Activated CD4-positive, alpha-beta memory T cell treated with anti-CD3 and anti-CD28 coated beads, Interleukin-2, amount 10 ng/mL, durations not matched to agents 7 days and 5 days (primary cell): ENCODE measurements at regions of chr16 and their contacts with region 1.

Region 1: DNA sequence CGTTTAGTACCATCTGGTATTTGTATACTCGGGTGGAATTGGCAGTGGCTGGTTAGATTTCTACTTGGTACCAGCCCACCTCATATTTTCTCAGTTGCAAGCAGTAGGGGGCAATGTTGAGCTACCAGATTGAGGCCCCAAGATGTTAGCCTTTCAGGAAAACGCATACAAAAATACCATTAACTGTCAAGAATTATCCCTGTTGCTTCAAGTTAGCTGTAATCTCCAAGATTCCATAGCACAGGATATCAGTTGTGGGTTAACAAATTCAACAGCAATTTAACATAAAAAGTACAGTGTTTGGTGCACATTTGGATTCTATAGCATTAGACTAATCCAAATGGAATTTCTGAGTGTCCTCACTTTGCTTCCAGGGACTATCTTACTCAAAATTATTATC is 188.2 kb downstream of the FTO start:
- DNase-seq: peak; percentile 66
- H3K4me3 Mint-ChIP-seq: peak overlapping the region; percentile 14
- H3K27ac Mint-ChIP-seq: peak overlapping the region; percentile 59
- H3K4me1 Mint-ChIP-seq: peaks cover 33% of the 10 kb centered on the region
- H3K27me3 Mint-ChIP-seq: no peaks in the 10 kb centered on the region

Region 2: GRCh38 chr16:53692142-53692541 is 200.0 kb before region 1 on chr16:
- CTCF ChIA-PET with region 1: no interaction called
- POLR2A ChIA-PET with region 1: no interaction called
- DNase-seq: no peak
- H3K4me3 Mint-ChIP-seq: no peak overlapping the region
- H3K27ac Mint-ChIP-seq: no peak overlapping the region
- H3K4me1 Mint-ChIP-seq: no peaks in the 10 kb centered on the region
- H3K27me3 Mint-ChIP-seq: no peaks in the 10 kb centered on the region

Region 3: DNA sequence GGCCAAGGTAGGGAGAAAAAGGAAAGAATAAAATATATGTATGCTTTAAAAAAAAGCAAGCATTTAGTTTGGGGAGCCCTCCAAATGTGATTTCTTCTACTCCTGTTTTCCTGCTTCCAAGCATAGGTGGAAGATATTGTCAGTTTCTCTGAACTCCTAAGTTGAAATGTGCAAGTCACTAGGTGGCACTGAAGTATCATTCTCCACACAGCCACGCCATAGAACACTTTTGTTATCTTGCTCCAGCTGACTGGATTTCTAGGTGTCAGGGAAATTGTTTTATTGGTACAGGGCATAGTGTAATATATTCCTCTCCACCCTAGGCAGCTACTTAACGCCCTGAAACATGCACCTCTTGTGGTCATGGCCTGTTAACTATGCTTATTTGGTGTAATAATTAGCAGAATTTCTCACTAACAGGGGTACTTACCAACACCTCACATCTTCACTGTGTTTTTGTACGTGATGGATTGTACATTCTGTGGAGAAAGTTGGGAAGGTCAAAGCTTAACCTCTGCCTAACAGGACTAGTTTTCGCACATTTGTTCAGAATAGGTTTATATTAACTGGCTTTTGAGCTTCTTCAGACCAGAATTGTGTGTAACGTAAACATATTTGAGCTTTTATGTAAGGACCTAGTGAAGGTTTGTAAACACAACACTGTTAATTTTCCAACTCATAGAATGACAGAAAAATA is 118.9 kb before region 1 on chr16:
- CTCF ChIA-PET with region 1: interaction called, 13 read pairs
- POLR2A ChIA-PET with region 1: no interaction called
- DNase-seq: peak; percentile 19
- H3K4me3 Mint-ChIP-seq: no peak overlapping the region
- H3K27ac Mint-ChIP-seq: no peak overlapping the region
- H3K4me1 Mint-ChIP-seq: peaks cover 25% of the 10 kb centered on the region
- H3K27me3 Mint-ChIP-seq: no peaks in the 10 kb centered on the region

Region 4: DNA sequence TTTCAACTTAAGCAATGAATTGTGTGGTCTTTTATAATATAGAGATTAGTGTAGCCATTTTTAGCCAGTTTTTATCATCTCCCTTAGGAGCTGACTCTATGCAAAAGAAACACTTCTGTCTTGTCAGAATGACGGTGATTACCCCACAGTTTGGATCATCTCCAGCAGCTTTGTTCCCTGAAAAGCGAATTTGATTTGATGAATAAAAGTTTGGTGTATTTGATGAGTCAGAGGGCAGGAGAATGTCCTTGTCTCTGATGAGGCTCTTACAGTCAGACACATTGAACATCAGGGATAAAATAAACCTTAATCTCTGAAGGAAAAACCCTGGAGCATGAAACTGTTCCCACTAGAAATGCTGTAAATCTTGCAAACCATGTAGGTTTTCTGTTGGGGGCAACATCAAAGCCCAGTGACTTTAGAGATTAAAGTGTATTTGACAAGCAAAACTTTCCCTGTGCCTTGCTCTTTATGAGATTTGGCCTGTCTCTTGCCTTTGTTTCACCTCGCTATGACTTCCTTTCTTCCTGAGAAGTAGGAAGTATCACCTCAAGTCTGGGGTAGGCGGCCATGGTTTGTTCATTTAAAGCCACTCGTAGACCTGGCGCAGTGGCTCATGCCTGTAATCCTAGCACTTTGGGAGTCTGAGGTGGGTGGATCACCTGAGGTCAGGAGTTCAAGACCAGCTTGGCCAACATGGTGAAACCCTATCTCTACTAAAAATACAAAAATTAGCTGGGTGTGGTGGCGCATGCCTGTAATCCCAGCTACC is 21.1 kb after region 1 on chr16:
- CTCF ChIA-PET with region 1: interaction called, 14 read pairs
- POLR2A ChIA-PET with region 1: no interaction called
- DNase-seq: peak; percentile 18
- H3K4me3 Mint-ChIP-seq: no peak overlapping the region
- H3K27ac Mint-ChIP-seq: no peak overlapping the region
- H3K4me1 Mint-ChIP-seq: peaks cover 4% of the 10 kb centered on the region
- H3K27me3 Mint-ChIP-seq: no peaks in the 10 kb centered on the region